Activated naive CD4-positive, alpha-beta T cell treated with anti-CD3 and anti-CD28 coated beads for 36 hours (primary cell): ENCODE measurements at regions of chr17 and their contacts with region 1.

Region 1: GRCh38 chr17:6913608-6914443 is 82.0 kb upstream of the ALOX12 start:
- DNase-seq: peak; percentile 85
- H3K4me3 Mint-ChIP-seq: peak overlapping the region; percentile 70
- H3K27ac Mint-ChIP-seq: peak overlapping the region; percentile 16
- H3K4me1 Mint-ChIP-seq: peaks cover 16% of the 10 kb centered on the region
- H3K27me3 Mint-ChIP-seq: peaks cover 14% of the 10 kb centered on the region

Region 2: DNA sequence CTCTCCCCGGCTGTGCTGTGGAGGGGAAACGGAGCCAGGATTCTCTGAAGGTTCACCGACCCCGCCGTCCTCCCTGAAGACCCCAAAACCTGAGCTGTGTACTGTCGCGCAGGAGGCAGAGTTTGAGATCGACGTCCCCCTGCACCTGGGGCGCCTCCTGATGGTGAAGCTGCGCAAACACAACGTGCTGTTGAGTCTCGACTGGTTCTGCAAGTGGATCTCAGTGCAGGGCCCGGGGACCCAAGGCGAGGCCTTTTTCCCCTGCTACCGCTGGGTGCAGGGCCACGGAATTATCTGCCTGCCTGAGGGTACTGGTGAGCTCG is 19.7 kb before region 1 on chr17:
- CTCF ChIA-PET with region 1: interaction called, 12 read pairs
- intact Hi-C with region 1: no loop called
- DNase-seq: peak; percentile 63
- H3K4me3 Mint-ChIP-seq: no peak overlapping the region
- H3K27ac Mint-ChIP-seq: no peak overlapping the region
- H3K4me1 Mint-ChIP-seq: peaks cover 5% of the 10 kb centered on the region
- H3K27me3 Mint-ChIP-seq: peaks cover 62% of the 10 kb centered on the region

Region 3: DNA sequence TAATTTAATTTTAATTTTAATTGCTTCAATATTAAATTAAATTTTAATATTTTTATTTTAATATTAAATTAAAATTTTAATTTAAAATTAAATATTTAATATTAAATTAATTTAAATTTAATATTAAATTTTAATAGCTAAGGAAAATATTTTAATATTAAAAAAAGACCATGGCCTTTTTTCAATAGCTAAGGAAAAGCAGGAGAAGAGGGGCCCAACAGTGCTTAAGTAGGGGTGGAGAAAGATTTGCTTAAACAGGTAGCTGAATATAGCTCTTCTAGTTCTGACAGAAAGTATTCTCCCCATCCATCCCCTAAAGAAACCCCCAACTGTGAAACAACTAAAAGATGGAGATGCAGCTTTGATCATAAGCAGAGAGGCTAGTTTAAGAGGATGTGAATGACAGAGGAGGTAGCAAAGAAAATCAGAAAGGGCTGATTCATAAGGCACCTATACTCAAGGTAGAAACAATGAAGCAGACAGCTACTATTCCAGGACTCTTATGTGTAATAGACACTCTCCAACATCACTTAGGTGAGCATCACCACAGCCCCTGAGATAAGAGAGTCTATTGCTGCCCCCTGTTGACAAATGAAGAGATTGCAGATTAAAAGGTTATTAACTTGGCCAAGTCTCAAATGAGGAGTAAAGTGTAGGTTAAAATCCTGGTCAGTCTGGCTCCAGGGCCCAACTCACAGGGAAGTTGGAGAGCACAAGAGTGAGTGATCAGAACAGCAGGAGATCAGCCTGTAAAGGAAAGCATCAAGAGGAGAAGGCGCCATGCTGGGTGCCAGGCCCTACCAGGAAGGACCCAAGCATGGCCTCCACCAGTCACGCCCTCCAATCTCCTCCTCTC is 90.8 kb after region 1 on chr17:
- CTCF ChIA-PET with region 1: interaction called, 129 read pairs
- intact Hi-C with region 1: loop called (anchors 1 kb)
- DNase-seq: peak; percentile 53
- H3K4me3 Mint-ChIP-seq: no peak overlapping the region
- H3K27ac Mint-ChIP-seq: no peak overlapping the region
- H3K4me1 Mint-ChIP-seq: peaks cover 14% of the 10 kb centered on the region
- H3K27me3 Mint-ChIP-seq: no peaks in the 10 kb centered on the region

Region 4: GRCh38 chr17:7072406-7072805 is 158.6 kb after region 1 on chr17:
- CTCF ChIA-PET with region 1: no interaction called
- intact Hi-C with region 1: no loop called
- DNase-seq: no peak
- H3K4me3 Mint-ChIP-seq: no peak overlapping the region
- H3K27ac Mint-ChIP-seq: no peak overlapping the region
- H3K4me1 Mint-ChIP-seq: no peaks in the 10 kb centered on the region
- H3K27me3 Mint-ChIP-seq: no peaks in the 10 kb centered on the region

Region 5: DNA sequence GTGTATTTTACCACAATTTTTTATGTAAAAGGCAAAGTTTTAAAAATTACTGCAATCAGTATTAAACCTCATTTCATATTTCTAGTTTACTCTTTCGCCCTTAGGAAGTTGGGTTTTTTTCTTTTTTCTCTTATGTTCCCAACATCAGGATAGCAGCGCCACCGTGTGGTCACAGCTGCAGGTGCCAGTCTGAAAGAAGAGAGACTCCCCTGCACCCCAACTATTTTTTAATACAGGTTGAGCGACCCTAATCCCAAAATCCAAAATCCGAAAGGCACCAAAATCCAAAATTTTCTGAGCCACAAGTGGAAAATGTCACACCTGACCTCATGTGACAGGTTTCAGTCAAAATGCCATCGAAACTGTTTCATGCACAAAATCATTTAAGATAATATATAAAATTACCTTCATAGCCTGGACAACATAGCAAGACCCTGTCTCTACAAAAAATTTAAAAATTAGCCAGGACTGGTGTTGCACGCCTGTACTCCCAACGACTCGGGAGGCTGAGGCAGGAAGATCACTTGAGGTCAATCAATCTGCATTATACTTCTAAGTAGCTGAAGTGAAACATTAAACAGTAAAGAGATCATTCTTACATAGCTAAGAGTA is 222.5 kb after region 1 on chr17:
- CTCF ChIA-PET with region 1: interaction called, 7 read pairs
- intact Hi-C with region 1: loop called (anchors 2 kb)
- DNase-seq: peak; percentile 88
- H3K4me3 Mint-ChIP-seq: no peak overlapping the region
- H3K27ac Mint-ChIP-seq: no peak overlapping the region
- H3K4me1 Mint-ChIP-seq: peaks cover 24% of the 10 kb centered on the region
- H3K27me3 Mint-ChIP-seq: no peaks in the 10 kb centered on the region

Region 6: GRCh38 chr17:7523033-7523432 is 609.2 kb after region 1 on chr17:
- CTCF ChIA-PET with region 1: no interaction called
- intact Hi-C with region 1: no loop called
- DNase-seq: peak; percentile 62
- H3K4me3 Mint-ChIP-seq: no peak overlapping the region
- H3K27ac Mint-ChIP-seq: no peak overlapping the region
- H3K4me1 Mint-ChIP-seq: no peaks in the 10 kb centered on the region
- H3K27me3 Mint-ChIP-seq: no peaks in the 10 kb centered on the region